Activated CD4-positive, alpha-beta memory T cell treated with anti-CD3 and anti-CD28 coated beads, Interleukin-2, amount 10 ng/mL, durations not matched to agents 7 days and 5 days (primary cell): ENCODE measurements at regions of chr20 and their contacts with region 1.

Region 1: GRCh38 chr20:60210779-60211617 is 252.8 kb downstream of the CDH26 start:
- DNase-seq: peak; percentile 62
- H3K4me3 Mint-ChIP-seq: no peak overlapping the region
- H3K27ac Mint-ChIP-seq: no peak overlapping the region
- H3K4me1 Mint-ChIP-seq: peaks cover 2% of the 10 kb centered on the region
- H3K27me3 Mint-ChIP-seq: no peaks in the 10 kb centered on the region

Region 2: DNA sequence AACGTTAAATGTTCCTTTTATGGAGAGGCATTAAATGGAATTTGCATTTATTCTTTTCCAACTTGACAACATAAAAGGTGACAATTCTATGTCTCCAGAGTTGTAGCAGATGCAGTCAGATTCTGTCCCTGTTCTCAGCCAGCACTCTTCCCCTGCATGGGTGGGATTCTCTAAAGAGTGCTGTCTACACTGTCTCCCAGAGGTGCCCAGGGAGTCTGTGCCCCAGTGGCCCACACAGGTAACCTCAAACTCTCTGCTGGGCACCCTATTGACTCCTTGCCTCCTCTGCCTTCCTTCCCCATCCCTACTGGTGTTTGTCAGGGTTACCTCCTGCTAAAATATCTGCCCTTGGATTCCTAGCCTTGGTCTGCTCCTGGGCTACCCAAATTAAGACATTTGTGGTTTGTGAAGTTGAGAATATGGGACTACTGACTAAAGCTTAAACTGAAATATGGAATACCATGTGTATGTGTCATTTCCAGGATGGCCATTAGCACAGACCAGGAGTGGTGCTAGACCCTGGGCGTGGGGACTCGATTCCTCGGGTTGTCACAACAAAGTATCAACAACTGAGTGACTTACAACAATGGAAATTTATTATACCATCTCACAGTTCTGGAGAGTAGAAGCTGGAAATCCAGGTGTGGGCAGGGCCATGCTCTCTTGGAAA is 32.0 kb after region 1 on chr20:
- CTCF ChIA-PET with region 1: no interaction called
- POLR2A ChIA-PET with region 1: no interaction called
- DNase-seq: no peak
- H3K4me3 Mint-ChIP-seq: no peak overlapping the region
- H3K27ac Mint-ChIP-seq: no peak overlapping the region
- H3K4me1 Mint-ChIP-seq: no peaks in the 10 kb centered on the region
- H3K27me3 Mint-ChIP-seq: no peaks in the 10 kb centered on the region

Region 3: GRCh38 chr20:60262967-60263603 is 52.1 kb after region 1 on chr20:
- CTCF ChIA-PET with region 1: interaction called, 13 read pairs
- POLR2A ChIA-PET with region 1: no interaction called
- DNase-seq: peak; percentile 63
- H3K4me3 Mint-ChIP-seq: no peak overlapping the region
- H3K27ac Mint-ChIP-seq: no peak overlapping the region
- H3K4me1 Mint-ChIP-seq: peaks cover 9% of the 10 kb centered on the region
- H3K27me3 Mint-ChIP-seq: peaks cover 4% of the 10 kb centered on the region